AG04449 (cell line): ENCODE measurements at regions of chr3 and their contacts with region 1.

Region 1: GRCh38 chr3:3200632-3201212 is 21.2 kb upstream of the CRBN start:
- DNase-seq: no peak
- H3K4me3 ChIP-seq: no peak overlapping the region
- CTCF ChIP-seq: peak; percentile 50

Region 2: DNA sequence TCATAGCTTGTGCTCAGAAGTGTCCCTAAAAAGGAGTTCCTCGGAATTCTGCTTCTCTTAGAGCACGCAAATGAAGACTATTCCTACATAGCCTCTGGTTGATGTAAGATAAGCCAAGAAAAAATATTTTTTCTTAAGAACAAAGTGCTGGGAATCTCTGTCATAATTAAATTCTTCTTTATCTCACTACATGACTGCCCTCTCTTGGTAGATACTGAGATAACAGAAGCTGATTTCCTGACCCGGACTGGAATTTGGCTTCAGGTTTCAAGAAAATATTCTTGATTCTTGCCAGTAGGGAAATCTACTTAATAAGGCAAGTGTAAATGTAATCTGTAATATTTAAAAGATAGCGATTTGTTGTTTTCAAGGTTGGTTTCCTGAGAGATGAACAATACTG is 1071.1 kb after region 1 on chr3:
- CTCF ChIA-PET with region 1: interaction called, 33 read pairs
- POLR2A ChIA-PET with region 1: no interaction called
- DNase-seq: no peak
- H3K4me3 ChIP-seq: no peak overlapping the region
- CTCF ChIP-seq: peak; percentile 6